Posterior vena cava (tissue), 2 donors: ENCODE measurements at regions of chr18 and their contacts with region 1.

Region 1: DNA sequence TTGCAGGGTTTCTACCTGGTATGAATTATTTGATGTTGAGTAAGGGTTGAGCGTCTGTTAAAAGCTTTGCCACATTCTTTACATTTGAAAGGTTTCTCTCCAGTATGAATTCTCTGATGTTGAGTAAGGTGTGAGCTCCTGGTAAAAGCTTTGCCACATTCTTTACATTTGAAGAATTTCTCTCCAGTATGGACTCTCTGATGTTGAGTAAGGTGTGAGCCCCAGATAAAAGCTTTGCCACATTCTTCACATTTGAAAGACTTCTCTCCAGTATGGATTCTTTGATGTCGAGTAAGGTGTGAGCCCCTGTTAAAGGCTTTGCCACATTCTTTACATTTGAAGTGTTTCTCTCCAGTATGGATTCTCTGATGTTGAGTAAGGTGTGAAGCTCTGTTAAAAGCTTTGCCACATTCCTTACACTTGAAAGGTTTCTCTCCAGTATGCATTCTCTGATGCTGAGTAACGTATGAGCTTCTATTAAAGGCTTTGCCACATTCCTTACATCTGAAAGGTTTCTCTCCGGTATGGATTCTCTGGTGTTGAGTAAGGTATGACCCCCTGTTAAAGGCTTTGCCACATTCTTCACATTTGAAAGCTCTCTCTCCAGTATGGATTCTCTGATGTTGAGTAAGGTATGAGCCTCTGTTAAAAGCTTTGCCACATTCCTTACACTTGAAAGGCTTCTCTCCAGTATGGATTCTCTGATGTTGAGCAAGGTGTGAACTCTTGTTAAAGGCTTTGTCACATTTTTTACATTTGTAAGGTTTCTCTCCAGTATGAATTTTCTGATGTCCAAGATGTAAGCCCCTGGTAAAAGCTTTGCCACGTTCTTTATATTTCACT is 27.1 kb downstream of the ZNF519 start:
- DNase-seq: no peak

Region 2: DNA sequence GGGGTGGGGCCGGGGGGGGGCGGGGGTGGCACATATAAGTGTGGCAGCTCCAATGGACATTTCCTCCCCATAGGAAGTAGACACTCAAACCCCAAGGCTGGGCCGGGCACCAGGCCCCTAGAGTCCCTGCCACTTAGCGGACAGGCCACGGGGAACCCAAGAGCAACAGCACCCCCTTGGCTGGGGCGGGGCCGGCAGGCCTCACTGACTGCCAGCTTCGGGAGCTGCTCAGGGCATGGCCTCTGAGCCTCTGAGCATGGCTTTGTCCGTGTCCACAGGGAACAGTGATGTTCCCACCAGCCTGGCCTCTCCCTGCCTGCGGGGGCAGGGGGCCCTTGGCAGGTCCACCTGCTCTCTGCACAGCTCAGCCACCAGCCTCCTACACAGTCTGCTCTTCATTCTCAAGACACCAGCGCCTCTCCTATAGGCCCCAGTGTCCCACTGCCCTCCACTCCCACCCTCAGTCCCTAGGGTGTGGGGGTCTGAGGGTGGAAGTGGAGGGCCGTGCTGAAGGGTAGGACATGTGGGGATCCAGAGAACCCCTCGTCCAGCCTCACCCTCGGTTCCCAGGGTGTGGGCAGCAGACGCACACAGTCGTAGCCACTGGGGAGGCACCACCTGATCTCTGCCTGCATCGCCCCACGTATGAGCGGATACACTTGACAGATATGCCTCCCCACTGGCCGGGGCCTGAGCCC is 485.5 kb before region 1 on chr18:
- intact Hi-C with region 1: loop called in 1 of 2 experiments (anchors 5 kb)
- DNase-seq: no peak